Mammary epithelial cell (primary cell): ENCODE measurements at regions of chr9 and their contacts with region 1.

Region 1: GRCh38 chr9:21559424-21560280 is 77.5 kb upstream of the IFNE start:
- DNase-seq: peak; percentile 85
- H3K4me3 ChIP-seq: peak overlapping the region; percentile 90 to 94 (median 91)
- H3K27ac ChIP-seq: peak overlapping the region; percentile 99
- H3K4me1 ChIP-seq: peaks cover 16% of the 10 kb centered on the region
- H3K27me3 ChIP-seq: no peaks in the 10 kb centered on the region
- CTCF ChIP-seq: no peak

Region 2: GRCh38 chr9:21252721-21253547 is 306.7 kb before region 1 on chr9:
- CTCF ChIA-PET with region 1: interaction called, 4 read pairs
- dilution Hi-C with region 1: no loop called
- in situ Hi-C with region 1: no loop called
- intact Hi-C with region 1: loop called (anchors 10 kb)
- DNase-seq: peak; percentile 41
- H3K4me3 ChIP-seq: peak overlapping the region in 1 of 3 experiments; percentile 6
- H3K27ac ChIP-seq: no peak overlapping the region
- H3K4me1 ChIP-seq: no peaks in the 10 kb centered on the region
- H3K27me3 ChIP-seq: peaks cover 7% of the 10 kb centered on the region
- CTCF ChIP-seq: peak; percentile 50 to 65

Region 3: GRCh38 chr9:21506626-21507484 is 52.8 kb before region 1 on chr9:
- CTCF ChIA-PET with region 1: no interaction called
- dilution Hi-C with region 1: no loop called
- in situ Hi-C with region 1: no loop called
- intact Hi-C with region 1: loop called (anchors 10 kb)
- DNase-seq: peak; percentile 76
- H3K4me3 ChIP-seq: no peak overlapping the region
- H3K27ac ChIP-seq: peak overlapping the region; percentile 18
- H3K4me1 ChIP-seq: peaks cover 56% of the 10 kb centered on the region
- H3K27me3 ChIP-seq: no peaks in the 10 kb centered on the region
- CTCF ChIP-seq: no peak

Region 4: DNA sequence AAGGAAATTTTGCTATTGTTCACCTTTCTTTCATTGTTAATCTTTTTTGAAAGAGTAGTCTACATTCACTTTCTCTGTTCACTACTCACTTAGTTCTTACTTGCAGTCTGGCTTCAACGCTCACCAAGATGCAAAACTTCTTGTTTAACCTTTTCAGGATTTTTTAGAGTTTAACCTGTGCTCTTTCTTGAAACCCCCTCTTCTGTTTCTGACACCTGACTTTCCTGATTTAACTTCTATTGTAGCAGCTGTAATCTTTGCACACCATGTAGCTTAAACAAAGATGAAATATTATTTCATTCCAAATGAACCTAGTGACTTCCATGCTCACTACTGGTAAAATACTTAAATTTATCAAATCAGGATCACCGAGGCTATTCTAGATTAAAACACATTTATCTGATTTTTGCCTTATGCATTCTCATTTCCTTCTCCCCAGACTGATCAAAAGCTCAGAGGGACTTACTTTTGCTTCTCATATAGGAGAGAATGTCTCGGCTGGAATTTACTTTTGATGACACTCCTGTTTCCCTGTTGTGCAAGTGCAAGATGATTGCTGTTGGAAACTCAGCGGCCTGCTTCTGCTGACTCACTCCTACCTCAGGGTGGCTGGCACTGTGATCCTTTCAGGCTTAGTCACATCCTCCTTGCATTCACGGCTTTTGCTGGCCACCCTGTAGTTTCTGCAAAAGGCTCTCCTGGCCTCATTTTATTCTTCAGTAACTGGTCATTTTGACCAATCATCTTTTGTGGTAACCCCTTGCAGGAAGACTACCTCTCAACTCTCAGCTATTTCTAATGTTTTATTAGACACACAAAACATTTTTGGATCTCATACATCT is 31.8 kb after region 1 on chr9:
- CTCF ChIA-PET with region 1: no interaction called
- dilution Hi-C with region 1: no loop called
- in situ Hi-C with region 1: no loop called
- intact Hi-C with region 1: loop called (anchors 1 kb)
- DNase-seq: peak; percentile 97
- H3K4me3 ChIP-seq: peak overlapping the region; percentile 39 to 77 (median 57)
- H3K27ac ChIP-seq: peak overlapping the region; percentile 97
- H3K4me1 ChIP-seq: peaks cover 18% of the 10 kb centered on the region
- H3K27me3 ChIP-seq: no peaks in the 10 kb centered on the region
- CTCF ChIP-seq: no peak

Region 5: GRCh38 chr9:21677834-21678233 is 118.2 kb after region 1 on chr9:
- CTCF ChIA-PET with region 1: no interaction called
- dilution Hi-C with region 1: loop called (anchors 5 kb)
- in situ Hi-C with region 1: loop called in 1 of 2 experiments (anchors 10 kb)
- intact Hi-C with region 1: loop called (anchors 1 kb)
- DNase-seq: peak; percentile 97
- H3K4me3 ChIP-seq: peak overlapping the region in 2 of 3 experiments; percentile 25 to 45
- H3K27ac ChIP-seq: peak overlapping the region; percentile 99
- H3K4me1 ChIP-seq: peaks cover 70% of the 10 kb centered on the region
- H3K27me3 ChIP-seq: no peaks in the 10 kb centered on the region
- CTCF ChIP-seq: no peak

Region 6: GRCh38 chr9:21709464-21710058 is 149.9 kb after region 1 on chr9:
- CTCF ChIA-PET with region 1: no interaction called
- dilution Hi-C with region 1: no loop called
- in situ Hi-C with region 1: no loop called
- intact Hi-C with region 1: loop called (anchors 2 kb)
- DNase-seq: peak; percentile 57
- H3K4me3 ChIP-seq: no peak overlapping the region
- H3K27ac ChIP-seq: no peak overlapping the region
- H3K4me1 ChIP-seq: peaks cover 37% of the 10 kb centered on the region
- H3K27me3 ChIP-seq: no peaks in the 10 kb centered on the region
- CTCF ChIP-seq: peak; percentile 83 to 96